ENCODE measurements at regions of chr1 and their contacts with region 1.

Region 1: DNA sequence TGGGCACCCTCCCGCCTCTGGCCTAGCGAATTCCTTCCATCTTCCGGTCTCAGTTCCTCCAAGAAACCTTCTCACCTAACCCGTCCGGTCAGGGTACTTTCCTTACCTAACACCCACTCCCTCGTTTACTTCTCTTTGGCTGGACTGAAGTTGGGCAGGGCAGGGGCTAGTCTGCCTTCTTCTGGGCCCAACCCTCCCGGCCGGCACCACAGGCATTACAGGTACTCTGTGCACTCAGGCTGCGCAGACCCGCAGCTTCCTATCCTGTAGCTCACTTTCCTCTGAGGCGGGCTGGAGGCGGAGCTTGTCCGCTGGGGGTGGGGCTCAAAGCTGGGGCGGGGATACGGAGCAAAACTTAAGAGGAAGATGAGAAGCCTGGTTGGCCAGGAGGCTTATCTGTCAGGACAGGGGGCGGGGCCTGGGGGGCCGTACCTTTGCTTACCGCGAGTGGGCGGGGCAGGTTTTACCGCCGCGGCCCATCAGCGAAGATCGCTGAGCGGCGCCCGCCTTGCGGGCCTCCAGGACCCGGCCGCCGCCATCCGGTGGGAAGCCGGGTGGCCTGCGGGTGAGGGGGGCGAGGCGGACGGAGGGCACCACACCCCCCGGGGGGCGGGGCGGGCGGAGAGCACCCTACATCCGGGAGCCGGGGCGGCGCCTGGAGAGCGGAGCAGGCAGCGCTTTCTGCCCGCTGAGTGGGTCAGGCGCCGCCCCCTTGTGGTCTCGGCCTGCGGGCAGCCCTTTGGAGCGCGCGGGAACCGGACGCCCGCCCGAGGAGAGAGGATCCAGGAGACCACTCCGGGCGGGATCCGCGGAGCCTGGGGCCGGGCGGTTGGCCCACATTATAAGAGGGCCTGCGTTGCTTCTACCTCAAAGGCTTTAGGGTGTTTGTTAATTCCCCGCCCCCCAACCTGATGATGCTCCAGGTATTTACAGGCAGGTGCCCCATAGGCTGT is 31.9 kb downstream of the ZNF648 start:
- DNase-seq: peak; percentile 96 to 99 (median 98)
- ATAC-seq: peak; percentile 91
- H3K4me3 ChIP-seq: peak overlapping the region; percentile 76
- H3K4me3 Mint-ChIP-seq: peak overlapping the region; percentile 90
- H3K27ac ChIP-seq: peak overlapping the region; percentile 72 to 81
- H3K27ac Mint-ChIP-seq: peak overlapping the region; percentile 84
- H3K4me1 ChIP-seq: peaks cover 13% of the 10 kb centered on the region
- H3K4me1 Mint-ChIP-seq: peaks cover 16% of the 10 kb centered on the region
- H3K27me3 ChIP-seq: no peaks in the 10 kb centered on the region
- H3K27me3 Mint-ChIP-seq: no peaks in the 10 kb centered on the region
- CTCF ChIP-seq: peak; percentile 45

Region 2: GRCh38 chr1:181021811-181022434 is 1007.7 kb before region 1 on chr1:
- CTCF ChIA-PET with region 1: no interaction called
- POLR2A ChIA-PET with region 1: no interaction called
- intact Hi-C with region 1: loop called in 1 of 2 experiments (anchors 10 kb)
- DNase-seq: peak in 13 of 14 experiments; percentile 22 to 80 (median 44)
- ATAC-seq: peak; percentile 40
- H3K4me3 ChIP-seq: peak overlapping the region; percentile 76
- H3K4me3 Mint-ChIP-seq: peak overlapping the region; percentile 99
- H3K27ac ChIP-seq: peak overlapping the region; percentile 53 to 83
- H3K27ac Mint-ChIP-seq: peak overlapping the region; percentile 98
- H3K4me1 ChIP-seq: peaks cover 26% of the 10 kb centered on the region
- H3K4me1 Mint-ChIP-seq: peaks cover 47% of the 10 kb centered on the region
- H3K27me3 ChIP-seq: no peaks in the 10 kb centered on the region
- H3K27me3 Mint-ChIP-seq: peaks cover 12% of the 10 kb centered on the region
- CTCF ChIP-seq: no peak

Region 3: DNA sequence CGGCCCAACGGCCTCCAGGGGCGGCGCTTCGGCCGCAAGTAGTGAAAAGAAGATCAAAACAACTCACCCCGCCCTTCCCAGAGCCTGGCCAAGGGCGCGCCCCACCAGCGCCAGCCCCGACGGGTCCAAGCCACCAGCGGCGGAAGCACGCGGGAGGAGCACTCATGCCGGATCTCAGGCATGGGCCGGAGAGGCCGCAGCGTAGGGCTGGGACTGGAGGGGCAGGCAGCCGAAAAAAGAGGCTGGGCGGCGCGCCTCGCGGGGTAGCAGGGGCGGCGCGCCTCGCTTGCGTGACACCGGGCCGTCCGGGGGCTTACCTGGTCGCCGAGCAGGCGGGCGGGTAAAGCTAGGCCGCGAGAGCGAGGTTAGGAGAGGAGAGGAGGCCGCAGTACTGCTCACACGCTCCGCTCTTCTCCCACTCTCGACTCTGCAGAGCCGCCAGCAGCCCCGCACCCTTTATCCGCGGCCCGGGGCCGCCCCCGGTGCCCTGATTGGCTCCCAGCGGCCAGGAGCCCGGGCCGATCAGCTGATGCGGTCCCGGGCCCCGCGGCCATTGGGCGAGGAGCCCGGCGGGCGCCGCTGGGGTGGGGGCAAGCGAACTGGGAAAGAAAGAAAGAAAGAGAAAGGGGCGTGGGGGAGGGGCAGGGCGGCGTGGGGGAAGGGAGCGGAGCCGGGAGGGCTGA is 361.8 kb after region 1 on chr1 and contains the start of gene GLUL:
- CTCF ChIA-PET with region 1: no interaction called
- POLR2A ChIA-PET with region 1: no interaction called
- intact Hi-C with region 1: loop called in 1 of 2 experiments (anchors 5 kb)
- DNase-seq: peak; percentile 33 to 85 (median 60)
- ATAC-seq: peak; percentile 65
- H3K4me3 ChIP-seq: peak within 1 kb of the TSS; percentile 79
- H3K4me3 Mint-ChIP-seq: peak within 1 kb of the TSS; percentile 94
- H3K27ac ChIP-seq: peak within 1 kb of the TSS in 1 of 2 donors; percentile 17
- H3K27ac Mint-ChIP-seq: peak within 1 kb of the TSS; percentile 83
- H3K4me1 ChIP-seq: peaks cover 27% of the 10 kb centered on the region
- H3K4me1 Mint-ChIP-seq: peaks cover 34% of the 10 kb centered on the region
- H3K27me3 ChIP-seq: no peaks in the 10 kb centered on the region
- H3K27me3 Mint-ChIP-seq: peaks cover 8% of the 10 kb centered on the region
- CTCF ChIP-seq: no peak
- total RNA-seq, gene GLUL: 60.4 to 64.0 TPM

Region 4: DNA sequence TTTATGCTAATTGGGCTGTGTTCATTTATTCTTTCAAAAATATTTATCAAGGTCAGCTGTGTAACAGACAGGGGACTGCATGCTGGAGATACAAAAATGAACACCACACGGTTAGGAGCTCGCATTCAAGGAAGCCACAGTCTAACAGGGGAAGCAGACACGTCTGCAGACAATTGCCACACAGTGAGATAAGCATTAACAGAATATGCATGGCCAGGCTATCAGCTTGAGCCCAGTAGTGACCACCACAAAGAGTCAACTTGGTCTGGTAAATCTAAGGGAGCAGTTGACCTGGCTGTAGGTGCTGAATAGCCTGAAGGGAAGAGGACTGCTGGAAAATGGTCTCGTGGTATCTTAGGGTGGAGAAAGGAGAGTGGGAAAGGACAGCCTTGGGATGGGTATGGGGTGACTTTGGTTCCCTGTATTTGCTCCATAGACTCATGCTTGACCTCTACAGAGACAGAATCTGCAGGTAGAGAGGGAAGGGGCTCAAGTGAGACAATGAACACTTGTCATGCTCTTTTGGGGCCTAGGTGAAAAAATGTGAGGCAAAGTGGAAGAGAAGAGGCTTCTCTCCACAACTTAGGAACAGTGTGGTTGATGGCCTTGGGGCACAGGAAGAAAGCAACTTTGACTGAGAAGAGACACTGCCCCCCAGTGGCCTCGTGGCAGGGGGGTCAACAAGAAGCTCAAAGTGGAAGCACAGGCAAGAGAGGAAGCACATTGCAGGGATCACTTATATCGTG is 752.4 kb after region 1 on chr1:
- CTCF ChIA-PET with region 1: no interaction called
- POLR2A ChIA-PET with region 1: no interaction called
- intact Hi-C with region 1: loop called in 1 of 2 experiments (anchors 5 kb)
- DNase-seq: peak; percentile 45 to 82 (median 62)
- ATAC-seq: peak; percentile 83
- H3K4me3 ChIP-seq: no peak overlapping the region
- H3K4me3 Mint-ChIP-seq: no peak overlapping the region
- H3K27ac ChIP-seq: no peak overlapping the region
- H3K27ac Mint-ChIP-seq: no peak overlapping the region
- H3K4me1 ChIP-seq: peaks cover 5% of the 10 kb centered on the region
- H3K4me1 Mint-ChIP-seq: peaks cover 4% of the 10 kb centered on the region
- H3K27me3 ChIP-seq: peaks cover 0 to 2% of the 10 kb centered on the region in 2 experiments
- H3K27me3 Mint-ChIP-seq: no peaks in the 10 kb centered on the region
- CTCF ChIP-seq: peak; percentile 58

Region 5: GRCh38 chr1:183635606-183636333 is 1606.1 kb after region 1 on chr1 and contains the start of gene ARPC5:
- CTCF ChIA-PET with region 1: no interaction called
- POLR2A ChIA-PET with region 1: no interaction called
- intact Hi-C with region 1: loop called in 1 of 2 experiments (anchors 10 kb)
- DNase-seq: peak; percentile 91 to 99 (median 94)
- ATAC-seq: peak; percentile 88
- H3K4me3 ChIP-seq: peak within 1 kb of the TSS; percentile 93
- H3K4me3 Mint-ChIP-seq: peak within 1 kb of the TSS; percentile 100
- H3K27ac ChIP-seq: peak within 1 kb of the TSS; percentile 61 to 86
- H3K27ac Mint-ChIP-seq: peak within 1 kb of the TSS; percentile 94
- H3K4me1 ChIP-seq: peaks cover 17% of the 10 kb centered on the region
- H3K4me1 Mint-ChIP-seq: peaks cover 51% of the 10 kb centered on the region
- H3K27me3 ChIP-seq: no peaks in the 10 kb centered on the region
- H3K27me3 Mint-ChIP-seq: no peaks in the 10 kb centered on the region
- CTCF ChIP-seq: no peak
- total RNA-seq, gene ARPC5: 21.4 to 23.0 TPM